ENCODE measurements at regions of chr18 and their contacts with region 1.

Region 1: DNA sequence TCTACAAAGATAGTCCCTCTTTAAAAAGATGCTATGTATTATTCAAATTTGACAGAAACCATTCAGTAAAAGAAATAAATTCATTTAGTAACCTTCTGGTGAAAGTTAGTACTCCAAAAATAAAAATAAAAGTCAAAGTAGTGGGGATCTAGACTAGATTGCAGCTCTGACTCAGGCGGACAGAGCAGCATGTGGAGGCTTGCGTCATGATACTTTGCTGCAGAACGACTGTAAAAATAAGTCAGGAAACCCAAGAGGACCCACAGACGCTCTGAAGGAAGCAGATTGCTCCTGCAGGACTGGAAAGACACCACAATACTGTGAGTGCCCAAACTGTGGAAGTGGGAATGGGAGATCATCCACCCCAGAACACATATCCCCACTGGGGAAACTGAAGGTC is 301.9 kb downstream of the RIT2 start:
- DNase-seq: no peak
- ATAC-seq: no peak
- H3K4me3 ChIP-seq: no peak overlapping the region
- H3K27ac ChIP-seq: no peak overlapping the region
- H3K4me1 ChIP-seq: no peaks in the 10 kb centered on the region
- H3K27me3 ChIP-seq: no peaks in the 10 kb centered on the region
- CTCF ChIP-seq: no peak
- POLR2A ChIP-seq: no peak
- RAD21 ChIP-seq: no peak

Region 2: GRCh38 chr18:42758852-42759251 is 54.7 kb before region 1 on chr18:
- CTCF ChIA-PET with region 1: no interaction called
- POLR2A ChIA-PET with region 1: no interaction called
- dilution Hi-C with region 1: no loop called
- in situ Hi-C with region 1: no loop called
- intact Hi-C with region 1: loop called (anchors 10 kb)
- DNase-seq: no peak
- ATAC-seq: no peak
- H3K4me3 ChIP-seq: no peak overlapping the region
- H3K27ac ChIP-seq: no peak overlapping the region
- H3K4me1 ChIP-seq: no peaks in the 10 kb centered on the region
- H3K27me3 ChIP-seq: no peaks in the 10 kb centered on the region
- CTCF ChIP-seq: no peak
- POLR2A ChIP-seq: no peak
- RAD21 ChIP-seq: no peak

Region 3: DNA sequence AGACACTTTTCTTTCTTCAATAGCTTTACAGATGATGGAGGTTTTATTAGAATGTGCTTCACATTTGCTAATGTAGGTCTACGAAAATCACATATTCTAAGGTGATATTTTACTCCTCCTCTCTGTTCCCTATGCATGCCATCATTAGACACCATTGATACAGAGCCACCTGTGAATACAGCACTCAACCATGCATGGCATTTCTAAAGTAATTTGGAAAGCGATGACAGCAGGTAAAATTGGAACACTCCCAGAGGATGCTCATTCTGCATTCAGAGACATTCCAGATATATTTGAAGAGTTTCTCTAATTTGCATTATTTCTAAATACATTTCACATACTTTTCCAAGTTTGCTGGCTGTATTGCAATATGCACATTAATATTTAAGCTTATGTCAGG is 367.2 kb after region 1 on chr18:
- CTCF ChIA-PET with region 1: no interaction called
- POLR2A ChIA-PET with region 1: no interaction called
- dilution Hi-C with region 1: no loop called
- in situ Hi-C with region 1: no loop called
- intact Hi-C with region 1: no loop called
- DNase-seq: no peak
- ATAC-seq: no peak
- H3K4me3 ChIP-seq: no peak overlapping the region
- H3K27ac ChIP-seq: no peak overlapping the region
- H3K4me1 ChIP-seq: no peaks in the 10 kb centered on the region
- H3K27me3 ChIP-seq: no peaks in the 10 kb centered on the region
- CTCF ChIP-seq: no peak
- POLR2A ChIP-seq: no peak
- RAD21 ChIP-seq: no peak

Measured in IMR-90 (cell line).